Transverse colon (tissue), 4 donors: ENCODE measurements at regions of chr12 and their contacts with region 1.

Region 1: GRCh38 chr12:49049566-49050413 is 10.8 kb downstream of the KMT2D start:
- DNase-seq: no peak
- H3K4me3 ChIP-seq: no peak overlapping the region
- H3K27ac ChIP-seq: no peak overlapping the region
- H3K4me1 ChIP-seq: no peaks in the 10 kb centered on the region
- H3K27me3 ChIP-seq: no peaks in the 10 kb centered on the region
- CTCF ChIP-seq: no peak
- EP300 ChIP-seq: no peak
- POLR2A ChIP-seq: no peak

Region 2: DNA sequence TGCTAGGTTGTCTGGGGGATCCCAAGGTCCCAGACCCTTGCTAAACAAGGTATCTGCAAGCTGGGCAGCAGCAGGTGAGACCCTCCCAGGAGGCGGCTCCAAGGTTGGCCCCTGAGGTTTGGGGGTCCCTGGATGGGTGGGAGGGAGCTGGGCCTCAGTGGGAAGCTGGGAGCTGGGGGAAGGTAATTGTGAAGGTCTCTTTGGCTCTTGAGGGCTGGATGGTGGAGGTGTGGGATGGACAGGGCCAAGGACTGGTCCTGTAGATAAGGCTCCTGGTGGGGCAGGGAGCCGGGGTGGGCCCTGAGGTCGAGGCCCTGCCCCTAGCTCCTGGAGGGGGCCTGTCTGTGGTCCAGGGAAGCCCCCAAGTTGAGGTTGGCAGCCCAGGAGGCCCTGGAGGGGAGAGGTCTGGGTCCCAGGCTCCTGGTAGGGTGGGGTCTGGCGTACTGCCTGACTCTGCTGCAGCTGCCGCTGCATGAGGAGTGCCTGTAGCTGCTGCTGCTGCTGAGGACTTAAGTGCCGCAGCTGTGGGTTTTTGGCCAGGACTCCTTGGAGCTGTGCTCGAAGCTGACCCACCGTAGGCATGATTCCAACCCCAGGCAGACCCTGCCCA is 18.1 kb before region 1 on chr12:
- in situ Hi-C with region 1: no loop called
- intact Hi-C with region 1: loop called (anchors 2 kb)
- DNase-seq: no peak
- H3K4me3 ChIP-seq: no peak overlapping the region
- H3K27ac ChIP-seq: no peak overlapping the region
- H3K4me1 ChIP-seq: no peaks in the 10 kb centered on the region
- H3K27me3 ChIP-seq: no peaks in the 10 kb centered on the region
- CTCF ChIP-seq: no peak
- EP300 ChIP-seq: no peak
- POLR2A ChIP-seq: no peak

Region 3: GRCh38 chr12:49336645-49337584 is 287.1 kb after region 1 on chr12 and contains the start of gene C1QL4:
- in situ Hi-C with region 1: no loop called
- intact Hi-C with region 1: no loop called
- DNase-seq: peak; percentile 87
- H3K4me3 ChIP-seq: peak within 1 kb of the TSS in 2 of 4 donors; percentile 26 to 45
- H3K27ac ChIP-seq: no peak within 1 kb of the TSS
- H3K4me1 ChIP-seq: peaks cover 4 to 27% (median 17%) of the 10 kb centered on the region in 4 donors
- H3K27me3 ChIP-seq: peaks cover 79% of the 10 kb centered on the region
- CTCF ChIP-seq: peak; percentile 84 to 99 (median 99)
- EP300 ChIP-seq: no peak
- POLR2A ChIP-seq: no peak
- total RNA-seq, gene C1QL4: not detected